Endothelial cell of umbilical vein (primary cell): ENCODE measurements at regions of chrX and their contacts with region 1.

Region 1: GRCh38 chrX:131677655-131678628 is 134.1 kb downstream of the OR13H1 start:
- DNase-seq: peak; percentile 1
- H3K4me3 ChIP-seq: no peak overlapping the region
- H3K27ac ChIP-seq: no peak overlapping the region
- H3K4me1 ChIP-seq: no peaks in the 10 kb centered on the region
- H3K27me3 ChIP-seq: no peaks in the 10 kb centered on the region
- CTCF ChIP-seq: peak; percentile 50 to 63
- POLR2A ChIP-seq: no peak

Region 2: DNA sequence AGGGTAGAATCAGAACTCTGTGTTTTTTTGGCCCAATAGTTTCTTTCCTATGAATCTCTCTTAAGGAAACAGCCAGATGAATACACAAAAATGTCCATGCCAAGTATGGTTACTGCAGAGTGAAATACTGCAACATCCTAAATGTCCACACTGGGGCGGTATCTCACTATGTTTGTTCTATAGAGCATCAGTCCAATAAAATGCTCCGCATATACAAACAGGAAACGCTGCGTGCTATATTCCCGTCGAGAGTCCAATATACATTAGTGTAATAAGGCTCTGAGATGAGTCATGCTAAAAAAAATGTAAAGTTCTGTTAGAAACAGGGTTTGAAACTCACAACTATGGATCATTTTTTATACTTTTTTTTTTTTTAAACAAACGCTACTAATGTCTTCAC is 702.0 kb before region 1 on chrX:
- CTCF ChIA-PET with region 1: interaction called, 8 read pairs
- POLR2A ChIA-PET with region 1: no interaction called
- dilution Hi-C with region 1: no loop called
- intact Hi-C with region 1: loop called (anchors 1 kb)
- DNase-seq: peak; percentile 60
- H3K4me3 ChIP-seq: no peak overlapping the region
- H3K27ac ChIP-seq: no peak overlapping the region
- H3K4me1 ChIP-seq: no peaks in the 10 kb centered on the region
- H3K27me3 ChIP-seq: no peaks in the 10 kb centered on the region
- CTCF ChIP-seq: peak; percentile 26 to 40
- POLR2A ChIP-seq: no peak

Region 3: GRCh38 chrX:132127743-132128142 is 449.8 kb after region 1 on chrX and contains the start of gene FRMD7:
- CTCF ChIA-PET with region 1: no interaction called
- POLR2A ChIA-PET with region 1: no interaction called
- dilution Hi-C with region 1: no loop called
- intact Hi-C with region 1: no loop called
- DNase-seq: no peak
- H3K4me3 ChIP-seq: no peak within 1 kb of the TSS
- H3K27ac ChIP-seq: no peak within 1 kb of the TSS
- H3K4me1 ChIP-seq: no peaks in the 10 kb centered on the region
- H3K27me3 ChIP-seq: peaks cover 0 to 2% of the 10 kb centered on the region in 2 experiments
- CTCF ChIP-seq: no peak
- POLR2A ChIP-seq: no peak
- total RNA-seq, gene FRMD7: not detected in 2 replicates